ENCODE measurements at regions of chr21 and their contacts with region 1.

Region 1: DNA sequence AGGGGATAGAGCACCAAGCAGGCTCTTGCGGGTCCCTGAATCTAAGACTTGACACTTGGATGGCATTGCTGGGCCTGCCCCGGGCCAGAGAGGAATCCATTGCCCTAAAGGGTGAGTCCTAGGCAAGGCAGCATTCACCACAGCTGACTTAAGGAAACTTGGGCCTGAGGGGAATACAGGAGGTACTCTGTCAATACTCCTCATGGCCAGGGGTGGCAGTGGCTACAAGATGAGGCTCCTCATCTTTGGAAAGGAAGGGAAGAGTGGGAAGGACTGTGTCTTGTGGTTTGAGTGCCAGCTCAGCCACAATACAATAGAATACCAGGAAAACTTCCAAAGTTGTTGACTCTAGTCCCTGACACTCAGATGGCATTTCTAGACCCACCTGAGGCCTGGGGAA is 5.1 kb downstream of the KRTAP22-1 start:
- DNase-seq: no peak
- H3K4me3 ChIP-seq: no peak overlapping the region
- H3K27ac ChIP-seq: no peak overlapping the region
- H3K4me1 ChIP-seq: no peaks in the 10 kb centered on the region
- H3K27me3 ChIP-seq: no peaks in the 10 kb centered on the region
- CTCF ChIP-seq: no peak
- POLR2A ChIP-seq: no peak

Region 2: DNA sequence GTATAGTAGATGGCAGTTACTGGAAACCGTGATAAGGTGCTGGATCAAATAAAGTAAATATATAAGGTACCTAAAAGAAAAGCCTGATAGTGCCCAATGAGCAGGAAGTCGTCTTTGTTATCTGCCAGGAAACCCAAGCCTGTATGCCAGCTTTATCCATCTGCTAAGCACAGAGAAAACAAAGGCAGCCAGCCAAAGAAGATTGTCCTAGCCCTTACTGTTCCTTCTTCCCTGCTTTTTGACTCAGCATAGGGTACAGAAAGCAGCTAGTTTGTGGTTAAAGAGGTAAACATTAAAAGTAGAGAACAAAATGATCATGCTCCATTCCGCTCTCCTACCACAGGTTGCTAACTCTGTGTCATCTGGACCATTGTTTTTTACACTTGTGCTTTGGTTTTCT is 25.8 kb before region 1 on chr21:
- intact Hi-C with region 1: loop called (anchors 1 kb)
- DNase-seq: no peak
- H3K4me3 ChIP-seq: no peak overlapping the region
- H3K27ac ChIP-seq: no peak overlapping the region
- H3K4me1 ChIP-seq: no peaks in the 10 kb centered on the region
- H3K27me3 ChIP-seq: no peaks in the 10 kb centered on the region
- CTCF ChIP-seq: no peak
- POLR2A ChIP-seq: no peak

Region 3: GRCh38 chr21:30718239-30718909 is 112.4 kb after region 1 on chr21 and contains the start of gene KRTAP21-3:
- intact Hi-C with region 1: no loop called
- DNase-seq: no peak
- H3K4me3 ChIP-seq: no peak within 1 kb of the TSS
- H3K27ac ChIP-seq: no peak within 1 kb of the TSS
- H3K4me1 ChIP-seq: no peaks in the 10 kb centered on the region
- H3K27me3 ChIP-seq: no peaks in the 10 kb centered on the region
- CTCF ChIP-seq: no peak
- POLR2A ChIP-seq: no peak
- total RNA-seq, gene KRTAP21-3: not detected

Region 4: DNA sequence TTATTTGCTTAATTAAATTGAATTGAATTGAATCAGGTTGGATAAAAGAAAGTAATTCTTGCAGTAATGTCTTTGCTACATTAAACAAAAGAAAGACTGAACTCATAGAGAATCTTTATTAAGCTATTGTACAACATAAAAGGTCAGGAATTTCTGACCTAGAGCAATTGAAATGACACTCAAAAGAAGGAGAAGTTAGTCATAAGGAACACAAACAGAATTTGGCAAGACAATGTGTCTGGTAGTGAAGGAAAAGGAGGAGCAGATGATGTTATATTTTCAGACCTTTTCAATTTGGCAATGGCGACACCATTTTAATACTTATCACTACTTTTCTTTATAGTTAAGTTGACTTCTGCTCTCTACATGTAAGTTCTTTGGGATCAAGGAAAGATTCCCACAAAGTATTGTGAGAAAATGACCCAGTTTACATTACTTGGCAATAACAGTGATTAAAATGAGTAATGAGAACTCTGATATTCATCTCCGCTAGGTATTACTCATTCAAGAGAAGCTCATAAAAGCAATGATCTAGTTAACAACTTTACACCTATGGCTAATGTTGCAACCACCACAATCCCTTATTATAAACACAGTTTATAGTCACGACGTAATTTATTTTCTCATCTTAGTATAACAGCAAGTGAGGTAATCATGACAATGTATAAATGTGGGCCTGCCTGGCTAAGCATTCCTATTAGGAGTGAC is 163.9 kb after region 1 on chr21:
- intact Hi-C with region 1: no loop called
- DNase-seq: no peak
- H3K4me3 ChIP-seq: no peak overlapping the region
- H3K27ac ChIP-seq: no peak overlapping the region
- H3K4me1 ChIP-seq: no peaks in the 10 kb centered on the region
- H3K27me3 ChIP-seq: no peaks in the 10 kb centered on the region
- CTCF ChIP-seq: no peak
- POLR2A ChIP-seq: no peak

Region 5: DNA sequence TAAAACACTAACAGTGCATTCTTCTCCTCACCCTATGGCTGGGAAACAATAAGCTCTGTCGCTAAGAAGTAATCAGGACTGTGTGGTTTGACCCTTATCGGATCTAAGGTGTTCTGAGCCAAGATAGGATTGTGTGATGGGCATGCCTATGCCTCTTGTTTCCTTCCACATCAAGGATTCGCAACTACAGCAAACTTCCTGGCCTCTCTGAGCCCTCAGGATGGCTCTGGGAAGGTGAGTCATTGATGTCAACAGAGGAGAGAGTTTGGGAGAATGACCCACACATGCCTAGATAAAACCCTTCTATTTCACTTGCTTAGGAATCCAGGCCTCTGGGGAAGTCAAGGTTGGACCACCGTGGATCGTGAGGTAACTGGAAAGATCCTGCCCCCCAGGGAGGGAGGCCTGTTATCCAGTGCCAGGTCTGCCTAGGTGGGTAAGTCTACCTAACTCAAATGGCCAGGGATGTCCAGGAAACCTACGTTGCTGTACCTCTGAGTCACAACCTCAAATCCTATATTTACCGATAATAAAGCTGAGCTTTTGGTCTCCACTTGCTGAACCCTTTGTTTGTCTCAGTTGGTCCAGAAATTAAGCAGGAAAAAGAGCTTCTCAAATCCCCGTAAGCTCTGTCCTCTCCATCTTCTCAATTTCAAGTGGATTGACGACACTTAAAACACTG is 710.7 kb after region 1 on chr21:
- intact Hi-C with region 1: no loop called
- DNase-seq: no peak
- H3K4me3 ChIP-seq: no peak overlapping the region
- H3K27ac ChIP-seq: no peak overlapping the region
- H3K4me1 ChIP-seq: no peaks in the 10 kb centered on the region
- H3K27me3 ChIP-seq: no peaks in the 10 kb centered on the region
- CTCF ChIP-seq: no peak
- POLR2A ChIP-seq: no peak